A673 (cell line): ENCODE measurements at regions of chr14 and their contacts with region 1.

Region 1: GRCh38 chr14:71138448-71139293 is 231.4 kb downstream of the PCNX1 start:
- DNase-seq: peak; percentile 72
- H3K4me3 ChIP-seq: no peak overlapping the region
- H3K27ac ChIP-seq: no peak overlapping the region
- H3K4me1 ChIP-seq: peaks cover 10% of the 10 kb centered on the region
- H3K27me3 ChIP-seq: no peaks in the 10 kb centered on the region
- CTCF ChIP-seq: peak; percentile 97

Region 2: GRCh38 chr14:71403656-71404055 is 265.0 kb after region 1 on chr14:
- CTCF ChIA-PET with region 1: interaction called, 3 read pairs
- POLR2A ChIA-PET with region 1: no interaction called
- intact Hi-C with region 1: loop called (anchors 10 kb)
- DNase-seq: peak; percentile 52
- H3K4me3 ChIP-seq: no peak overlapping the region
- H3K27ac ChIP-seq: no peak overlapping the region
- H3K4me1 ChIP-seq: peaks cover 31% of the 10 kb centered on the region
- H3K27me3 ChIP-seq: no peaks in the 10 kb centered on the region
- CTCF ChIP-seq: peak; percentile 32; the same call in 1 of the 2 replicates